ENCODE measurements at regions of chr1 and their contacts with region 1.

Region 1: GRCh38 chr1:198681831-198682759 is 43.3 kb downstream of the PTPRC start:
- DNase-seq: peak; percentile 87 to 96 (median 94)
- H3K4me3 ChIP-seq: peak overlapping the region in 1 of 2 donors; percentile 33
- H3K4me3 Mint-ChIP-seq: peak overlapping the region; percentile 63 to 87 (median 81)
- H3K27ac ChIP-seq: peak overlapping the region; percentile 94
- H3K27ac Mint-ChIP-seq: peak overlapping the region; percentile 97 to 99 (median 99)
- H3K4me1 ChIP-seq: peaks cover 95% of the 10 kb centered on the region
- H3K4me1 Mint-ChIP-seq: peaks cover 64 to 92% (median 73%) of the 10 kb centered on the region in 4 donors
- H3K27me3 ChIP-seq: no peaks in the 10 kb centered on the region
- H3K27me3 Mint-ChIP-seq: no peaks in the 10 kb centered on the region

Region 2: DNA sequence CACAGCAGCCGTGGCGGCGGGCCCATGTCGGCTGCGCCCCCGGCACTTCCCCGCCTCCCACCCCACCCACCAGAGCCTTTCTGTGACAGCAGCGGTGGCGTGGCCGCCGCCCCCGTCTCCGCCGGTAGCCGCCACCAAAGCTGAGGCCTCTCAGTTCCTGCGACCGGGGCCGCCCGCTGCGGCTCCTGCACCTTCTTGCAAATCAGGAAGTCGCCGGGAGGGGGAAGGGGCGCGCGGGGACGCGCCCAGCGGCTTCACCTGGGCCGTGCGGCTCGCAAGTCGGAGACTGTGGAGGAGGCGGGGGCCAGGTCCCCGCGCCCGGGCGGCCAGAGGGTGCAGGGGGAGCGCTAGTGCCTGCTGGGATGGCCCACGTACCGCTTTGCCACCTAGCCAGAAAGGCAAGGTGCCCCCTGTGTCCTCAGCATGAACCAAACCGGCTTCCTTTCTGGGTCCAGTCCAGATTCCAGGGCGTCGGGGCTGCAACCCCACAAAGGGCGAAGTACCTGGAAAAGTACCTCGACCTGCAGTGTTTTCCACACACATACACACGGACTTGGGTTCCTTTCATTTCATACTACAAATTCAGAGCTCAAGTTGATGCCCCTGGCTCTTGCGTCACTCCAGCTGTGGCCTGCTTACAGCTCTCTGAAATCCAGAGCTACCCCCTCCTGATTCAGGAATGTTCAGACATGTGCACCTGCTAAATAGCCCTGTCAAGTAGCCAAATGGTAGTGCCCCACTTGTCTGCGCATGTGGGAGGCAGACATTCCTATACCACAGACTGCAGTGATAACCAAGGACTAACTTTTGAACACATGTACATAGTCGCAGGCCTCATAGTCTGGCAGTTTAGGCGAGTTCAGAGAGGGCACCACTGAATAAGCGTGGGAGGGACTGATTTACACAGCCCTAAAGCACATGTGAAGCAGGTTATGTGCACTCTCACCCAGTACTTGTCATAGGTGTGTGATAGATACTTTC is 906.5 kb before region 1 on chr1 and contains the start of gene DENND1B:
- CTCF ChIA-PET with region 1: no interaction called
- POLR2A ChIA-PET with region 1: no interaction called
- intact Hi-C with region 1: loop called (anchors 10 kb)
- DNase-seq: peak; percentile 82 to 88 (median 83)
- H3K4me3 ChIP-seq: peak within 1 kb of the TSS; percentile 73 to 84
- H3K4me3 Mint-ChIP-seq: peak within 1 kb of the TSS; percentile 87 to 97 (median 92)
- H3K27ac ChIP-seq: peak within 1 kb of the TSS; percentile 68
- H3K27ac Mint-ChIP-seq: peak within 1 kb of the TSS; percentile 94 to 99 (median 98)
- H3K4me1 ChIP-seq: peaks cover 71% of the 10 kb centered on the region
- H3K4me1 Mint-ChIP-seq: peaks cover 56 to 73% (median 65%) of the 10 kb centered on the region in 4 donors
- H3K27me3 ChIP-seq: no peaks in the 10 kb centered on the region
- H3K27me3 Mint-ChIP-seq: no peaks in the 10 kb centered on the region
- total RNA-seq, gene DENND1B: 25.5 to 26.3 TPM

Region 3: GRCh38 chr1:198465201-198466144 is 216.6 kb before region 1 on chr1:
- CTCF ChIA-PET with region 1: interaction called, 4 read pairs
- POLR2A ChIA-PET with region 1: no interaction called
- intact Hi-C with region 1: loop called (anchors 5 kb)
- DNase-seq: peak in 4 of 5 donors; percentile 30 to 36 (median 36)
- H3K4me3 ChIP-seq: no peak overlapping the region
- H3K4me3 Mint-ChIP-seq: no peak overlapping the region
- H3K27ac ChIP-seq: no peak overlapping the region
- H3K27ac Mint-ChIP-seq: no peak overlapping the region
- H3K4me1 ChIP-seq: no peaks in the 10 kb centered on the region
- H3K4me1 Mint-ChIP-seq: peaks cover 0 to 1% (median 0%) of the 10 kb centered on the region in 4 donors
- H3K27me3 ChIP-seq: no peaks in the 10 kb centered on the region
- H3K27me3 Mint-ChIP-seq: peaks cover 0 to under 1% of the 10 kb centered on the region in 2 donors

Region 4: DNA sequence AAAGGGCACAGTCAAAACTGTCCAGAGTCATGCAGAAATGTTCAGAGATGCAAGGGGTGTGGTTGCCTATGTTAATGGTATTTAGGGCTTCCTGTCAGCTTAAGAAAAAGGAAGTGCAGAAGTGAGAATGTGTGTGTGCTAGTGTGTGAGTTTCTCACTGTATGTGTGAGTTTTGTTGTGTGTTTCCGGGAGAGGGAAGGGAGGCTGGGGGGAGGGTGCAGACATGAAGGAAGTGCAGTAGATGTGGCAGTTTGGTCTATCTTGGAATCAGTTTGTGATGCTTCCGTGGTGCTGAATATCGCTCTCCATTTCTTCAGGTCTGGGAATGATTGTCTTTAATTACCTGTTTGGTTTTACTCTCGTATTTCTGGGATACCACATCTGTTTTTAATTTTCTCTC is 125.1 kb before region 1 on chr1:
- CTCF ChIA-PET with region 1: no interaction called
- POLR2A ChIA-PET with region 1: interaction called, 24 read pairs
- intact Hi-C with region 1: loop called (anchors 1 kb)
- DNase-seq: peak; percentile 80 to 85 (median 83)
- H3K4me3 ChIP-seq: peak overlapping the region in 1 of 2 donors; percentile 30
- H3K4me3 Mint-ChIP-seq: peak overlapping the region; percentile 61 to 84 (median 74)
- H3K27ac ChIP-seq: no peak overlapping the region
- H3K27ac Mint-ChIP-seq: peak overlapping the region; percentile 9 to 80 (median 47)
- H3K4me1 ChIP-seq: peaks cover 80% of the 10 kb centered on the region
- H3K4me1 Mint-ChIP-seq: peaks cover 57 to 90% (median 71%) of the 10 kb centered on the region in 4 donors
- H3K27me3 ChIP-seq: no peaks in the 10 kb centered on the region
- H3K27me3 Mint-ChIP-seq: no peaks in the 10 kb centered on the region

Region 5: DNA sequence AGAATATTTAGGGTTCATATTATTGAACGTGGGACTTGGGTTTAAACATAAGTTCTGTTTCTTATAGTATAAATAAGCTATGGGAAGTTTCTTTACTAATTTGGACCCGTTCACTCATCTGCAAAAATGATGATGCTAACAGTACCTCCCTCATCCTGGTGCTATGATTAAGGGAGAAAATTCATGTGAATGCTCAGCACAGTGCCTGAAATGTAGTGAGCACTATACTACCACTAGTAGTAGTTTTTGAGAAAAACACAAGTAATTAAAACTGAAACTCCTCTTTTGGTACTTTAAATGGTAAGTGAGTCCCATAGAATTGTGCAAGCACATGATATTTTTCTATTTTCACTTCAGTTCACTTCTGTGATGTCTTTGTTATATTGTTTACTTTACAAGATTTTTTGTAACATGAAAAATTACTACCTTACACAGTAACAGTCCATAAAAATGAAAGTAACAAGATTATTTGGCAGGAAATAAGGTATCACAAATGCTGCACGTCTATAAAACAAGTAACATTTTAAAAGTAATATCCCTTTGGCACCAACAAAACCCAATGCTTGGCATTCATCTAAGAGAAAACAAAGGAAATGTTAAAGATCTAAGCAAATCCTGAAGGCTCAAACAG is 54.5 kb before region 1 on chr1:
- CTCF ChIA-PET with region 1: interaction called, 69 read pairs
- POLR2A ChIA-PET with region 1: interaction called, 277 read pairs
- intact Hi-C with region 1: no loop called
- DNase-seq: peak in 1 of 5 donors; percentile 24
- H3K4me3 ChIP-seq: peak overlapping the region in 1 of 2 donors; percentile 26
- H3K4me3 Mint-ChIP-seq: peak overlapping the region; percentile 45 to 85 (median 79)
- H3K27ac ChIP-seq: peak overlapping the region; percentile 38
- H3K27ac Mint-ChIP-seq: peak overlapping the region; percentile 89 to 96 (median 91)
- H3K4me1 ChIP-seq: peaks cover 100% of the 10 kb centered on the region
- H3K4me1 Mint-ChIP-seq: peaks cover 77 to 96% (median 84%) of the 10 kb centered on the region in 4 donors
- H3K27me3 ChIP-seq: no peaks in the 10 kb centered on the region
- H3K27me3 Mint-ChIP-seq: no peaks in the 10 kb centered on the region

Region 6: DNA sequence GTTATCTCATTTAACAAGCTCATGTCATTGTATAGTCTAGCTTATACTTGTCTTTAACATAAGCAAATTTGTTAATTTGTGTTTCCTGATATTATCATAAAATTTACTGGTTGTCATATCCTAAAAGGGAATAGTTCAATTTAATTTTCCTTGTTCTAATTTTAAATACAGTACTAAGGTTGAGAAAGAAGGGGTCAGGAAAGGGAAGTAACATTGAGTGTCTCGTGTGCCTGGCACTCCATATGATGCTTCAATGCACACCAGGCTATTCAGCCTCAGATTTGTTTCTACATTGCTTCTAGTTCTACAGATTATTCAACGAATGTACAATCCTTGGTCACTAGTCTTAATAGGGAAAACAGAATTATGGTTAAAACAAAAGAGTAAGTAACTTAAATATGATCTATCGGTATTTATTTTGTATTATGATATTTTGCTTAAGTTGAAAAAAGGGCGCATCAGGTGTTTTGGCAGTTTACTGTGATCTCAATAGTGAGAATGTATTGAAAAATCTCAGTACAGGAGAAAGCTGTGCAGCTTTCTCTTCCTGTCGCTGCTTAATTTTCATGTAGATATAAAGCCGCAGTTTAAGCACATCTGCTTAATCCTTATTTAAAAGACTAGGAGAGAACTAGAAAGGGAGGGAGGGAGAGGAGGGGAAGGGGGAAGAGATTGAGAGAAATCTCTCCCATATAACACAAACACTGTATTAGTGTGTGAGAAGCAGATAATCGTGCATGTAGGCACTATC is 30.3 kb before region 1 on chr1:
- CTCF ChIA-PET with region 1: interaction called, 11 read pairs
- POLR2A ChIA-PET with region 1: interaction called, 449 read pairs
- intact Hi-C with region 1: loop called (anchors 1 kb)
- DNase-seq: no peak
- H3K4me3 ChIP-seq: peak overlapping the region; percentile 12 to 39
- H3K4me3 Mint-ChIP-seq: peak overlapping the region; percentile 70 to 88 (median 78)
- H3K27ac ChIP-seq: peak overlapping the region; percentile 73
- H3K27ac Mint-ChIP-seq: peak overlapping the region; percentile 94 to 98 (median 96)
- H3K4me1 ChIP-seq: peaks cover 91% of the 10 kb centered on the region
- H3K4me1 Mint-ChIP-seq: peaks cover 49 to 73% (median 64%) of the 10 kb centered on the region in 4 donors
- H3K27me3 ChIP-seq: no peaks in the 10 kb centered on the region
- H3K27me3 Mint-ChIP-seq: no peaks in the 10 kb centered on the region

Region 7: GRCh38 chr1:198669023-198669698 is 12.9 kb before region 1 on chr1:
- CTCF ChIA-PET with region 1: interaction called, 12 read pairs
- POLR2A ChIA-PET with region 1: interaction called, 284 read pairs
- intact Hi-C with region 1: loop called (anchors 1 kb)
- DNase-seq: peak; percentile 56 to 81 (median 68)
- H3K4me3 ChIP-seq: no peak overlapping the region
- H3K4me3 Mint-ChIP-seq: peak overlapping the region; percentile 64 to 82 (median 76)
- H3K27ac ChIP-seq: peak overlapping the region; percentile 61
- H3K27ac Mint-ChIP-seq: peak overlapping the region; percentile 96 to 99 (median 97)
- H3K4me1 ChIP-seq: peaks cover 98% of the 10 kb centered on the region
- H3K4me1 Mint-ChIP-seq: peaks cover 75 to 95% (median 85%) of the 10 kb centered on the region in 4 donors
- H3K27me3 ChIP-seq: no peaks in the 10 kb centered on the region
- H3K27me3 Mint-ChIP-seq: no peaks in the 10 kb centered on the region

Region 8: GRCh38 chr1:198730952-198731351 is 48.9 kb after region 1 on chr1:
- CTCF ChIA-PET with region 1: no interaction called
- POLR2A ChIA-PET with region 1: no interaction called
- intact Hi-C with region 1: no loop called
- DNase-seq: no peak
- H3K4me3 ChIP-seq: no peak overlapping the region
- H3K4me3 Mint-ChIP-seq: no peak overlapping the region
- H3K27ac ChIP-seq: no peak overlapping the region
- H3K27ac Mint-ChIP-seq: peak overlapping the region in 3 of 7 donors; percentile 23 to 70 (median 52)
- H3K4me1 ChIP-seq: peaks cover 55% of the 10 kb centered on the region
- H3K4me1 Mint-ChIP-seq: peaks cover 36 to 65% (median 42%) of the 10 kb centered on the region in 4 donors
- H3K27me3 ChIP-seq: no peaks in the 10 kb centered on the region
- H3K27me3 Mint-ChIP-seq: no peaks in the 10 kb centered on the region